Activated CD4-positive, alpha-beta memory T cell treated with anti-CD3 and anti-CD28 coated beads, Interleukin-2, amount 10 ng/mL, durations not matched to agents 7 days and 5 days (primary cell): ENCODE measurements at regions of chr12 and their contacts with region 1.

Region 1: GRCh38 chr12:120469450-120470149 is at the start of gene SRSF9:
- DNase-seq: peak; percentile 97
- H3K4me3 Mint-ChIP-seq: peak within 1 kb of the TSS; percentile 93
- H3K27ac Mint-ChIP-seq: peak within 1 kb of the TSS; percentile 84
- H3K4me1 Mint-ChIP-seq: peaks cover 47% of the 10 kb centered on the region
- H3K27me3 Mint-ChIP-seq: peaks cover 2% of the 10 kb centered on the region
- total RNA-seq, gene SRSF9: 175 to 180 TPM

Region 2: GRCh38 chr12:120394483-120395367 is 74.9 kb before region 1 on chr12:
- CTCF ChIA-PET with region 1: no interaction called
- POLR2A ChIA-PET with region 1: no interaction called
- DNase-seq: no peak
- H3K4me3 Mint-ChIP-seq: no peak overlapping the region
- H3K27ac Mint-ChIP-seq: no peak overlapping the region
- H3K4me1 Mint-ChIP-seq: peaks cover 2% of the 10 kb centered on the region
- H3K27me3 Mint-ChIP-seq: peaks cover 24% of the 10 kb centered on the region

Region 3: GRCh38 chr12:120445911-120446843 is 23.4 kb before region 1 on chr12 and contains the starts of genes GATC and TRIAP1:
- CTCF ChIA-PET with region 1: interaction called, 21 read pairs
- POLR2A ChIA-PET with region 1: interaction called, 19 read pairs
- DNase-seq: peak; percentile 90
- H3K4me3 Mint-ChIP-seq: peak within 1 kb of the TSS; percentile 87
- H3K27ac Mint-ChIP-seq: peak within 1 kb of the TSS; percentile 85
- H3K4me1 Mint-ChIP-seq: peaks cover 44% of the 10 kb centered on the region
- H3K27me3 Mint-ChIP-seq: no peaks in the 10 kb centered on the region
- total RNA-seq, gene GATC: 28.6 to 29.5 TPM
- total RNA-seq, gene TRIAP1: 20.6 to 21.6 TPM

Region 4: GRCh38 chr12:120489018-120489417 is 19.4 kb after region 1 on chr12:
- CTCF ChIA-PET with region 1: interaction called, 13 read pairs
- POLR2A ChIA-PET with region 1: interaction called, 27 read pairs
- DNase-seq: no peak
- H3K4me3 Mint-ChIP-seq: no peak overlapping the region
- H3K27ac Mint-ChIP-seq: no peak overlapping the region
- H3K4me1 Mint-ChIP-seq: no peaks in the 10 kb centered on the region
- H3K27me3 Mint-ChIP-seq: no peaks in the 10 kb centered on the region

Region 5: GRCh38 chr12:120534203-120534702 is 64.7 kb after region 1 on chr12 and contains the start of gene RNF10:
- CTCF ChIA-PET with region 1: interaction called, 9 read pairs
- POLR2A ChIA-PET with region 1: interaction called, 10 read pairs
- DNase-seq: peak; percentile 78
- H3K4me3 Mint-ChIP-seq: peak within 1 kb of the TSS; percentile 88
- H3K27ac Mint-ChIP-seq: peak within 1 kb of the TSS; percentile 93
- H3K4me1 Mint-ChIP-seq: peaks cover 52% of the 10 kb centered on the region
- H3K27me3 Mint-ChIP-seq: no peaks in the 10 kb centered on the region
- total RNA-seq, gene RNF10: 225 to 229 TPM